ENCODE measurements at regions of chr11 and their contacts with region 1.

Region 1: DNA sequence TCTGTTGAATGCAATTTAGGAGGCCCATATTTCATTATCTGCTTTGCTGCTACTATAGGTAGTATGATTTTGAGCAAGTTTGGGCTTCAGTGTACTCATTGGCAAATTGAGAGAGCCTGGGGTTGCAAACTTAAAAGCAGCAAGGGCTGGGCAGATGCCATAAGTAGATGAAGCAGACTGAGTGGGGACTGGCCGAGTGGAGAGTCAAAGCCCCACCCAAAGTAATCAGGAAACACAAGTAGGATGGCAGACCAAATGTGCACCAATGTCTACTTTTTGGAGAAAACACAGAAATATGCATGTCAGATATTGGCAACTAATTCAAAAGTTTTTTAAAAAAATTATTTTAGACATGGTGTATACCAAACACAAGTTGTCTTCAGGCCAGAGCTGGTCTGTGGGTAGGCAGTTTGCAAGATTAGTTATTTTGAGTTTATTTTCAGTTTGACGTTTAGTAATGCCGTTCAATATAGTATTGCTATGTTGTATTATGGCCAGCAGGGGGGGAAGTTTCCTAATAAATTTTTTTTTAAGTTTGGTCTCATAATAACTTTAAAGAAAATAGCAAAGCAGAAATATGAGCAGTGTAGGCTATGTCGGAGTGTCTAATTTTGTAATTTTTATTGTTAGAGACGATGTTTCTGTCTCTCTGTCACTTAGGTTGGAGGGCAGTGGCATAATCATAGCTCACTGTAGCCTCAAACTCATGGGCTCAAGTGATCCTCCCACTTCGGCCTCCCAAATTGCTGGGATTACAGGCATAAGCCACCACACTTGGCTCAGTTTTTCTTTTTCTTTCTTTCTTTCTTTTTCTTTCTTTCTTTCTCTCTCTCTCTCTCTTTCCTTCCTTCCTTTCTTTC is 105.1 kb downstream of the HIPK3 start:
- DNase-seq: no peak
- ATAC-seq: peak; percentile 84
- H3K4me3 ChIP-seq: no peak overlapping the region
- H3K27ac ChIP-seq: no peak overlapping the region
- H3K4me1 ChIP-seq: no peaks in the 10 kb centered on the region
- H3K27me3 ChIP-seq: no peaks in the 10 kb centered on the region
- CTCF ChIP-seq: peak; percentile 39 to 63 (median 47); a peak in 4 of 6 replicates
- EP300 ChIP-seq: no peak
- POLR2A ChIP-seq: no peak
- RAD21 ChIP-seq: peak; percentile 76

Region 2: DNA sequence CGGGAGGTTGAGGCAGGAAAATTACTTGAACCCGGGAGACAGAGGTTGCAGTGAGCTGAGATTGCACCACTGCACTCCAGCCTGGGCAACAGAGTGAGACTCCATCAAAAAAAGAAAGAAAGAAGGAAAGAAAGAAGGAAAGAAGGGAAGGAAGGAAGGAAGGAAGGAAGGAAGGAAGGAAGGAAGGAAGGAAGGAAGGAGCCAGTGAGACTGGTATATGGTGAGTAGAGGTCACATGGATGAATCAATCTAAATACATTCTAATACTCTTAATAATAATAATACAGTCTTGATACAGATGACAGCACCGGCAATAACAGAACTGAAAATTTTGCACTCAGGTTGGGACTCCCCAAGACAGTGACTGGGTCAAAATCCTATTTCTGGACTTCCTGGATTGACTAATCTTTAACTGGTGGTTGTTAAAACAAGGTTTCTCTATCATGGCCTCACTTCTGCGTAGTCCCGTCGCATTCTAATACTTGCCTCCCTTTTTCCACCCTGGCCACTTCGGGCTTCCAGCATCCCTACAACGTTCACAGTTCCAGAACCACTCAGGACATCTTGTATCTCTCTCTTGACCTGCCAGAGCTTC is 832.2 kb before region 1 on chr11:
- CTCF ChIA-PET with region 1: no interaction called
- POLR2A ChIA-PET with region 1: no interaction called
- RAD21 ChIA-PET with region 1: no interaction called
- SMC1A ChIA-PET with region 1: no interaction called
- in situ Hi-C with region 1: no loop called
- intact Hi-C with region 1: no loop called
- DNase-seq: peak; percentile 59
- ATAC-seq: peak; percentile 99
- H3K4me3 ChIP-seq: no peak overlapping the region
- H3K27ac ChIP-seq: peak overlapping the region; percentile 38
- H3K4me1 ChIP-seq: peaks cover 12% of the 10 kb centered on the region
- H3K27me3 ChIP-seq: no peaks in the 10 kb centered on the region
- CTCF ChIP-seq: no peak
- EP300 ChIP-seq: peak; percentile 76 to 79; a peak in 3 of 4 replicates
- POLR2A ChIP-seq: no peak
- RAD21 ChIP-seq: no peak

Region 3: DNA sequence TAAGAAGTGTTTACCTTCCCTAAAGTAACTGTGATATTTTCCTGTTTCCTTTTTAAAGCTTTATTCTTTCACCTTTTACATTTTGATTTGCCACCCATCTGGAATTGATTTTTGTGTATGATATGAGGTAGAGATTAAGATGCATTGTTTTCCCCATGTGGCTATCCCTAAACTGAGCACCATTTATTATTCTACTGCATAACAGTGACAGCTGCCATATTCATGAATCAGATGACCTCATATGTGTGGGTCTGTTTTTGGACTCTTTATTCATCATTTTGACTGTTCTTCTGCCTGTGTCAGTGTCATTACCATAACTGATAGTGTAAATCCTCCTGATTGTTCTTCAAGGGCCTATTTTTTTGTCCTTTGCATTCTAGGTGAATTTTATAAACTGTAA is 54.3 kb before region 1 on chr11:
- CTCF ChIA-PET with region 1: no interaction called
- POLR2A ChIA-PET with region 1: no interaction called
- RAD21 ChIA-PET with region 1: no interaction called
- SMC1A ChIA-PET with region 1: no interaction called
- in situ Hi-C with region 1: no loop called
- intact Hi-C with region 1: no loop called
- DNase-seq: no peak
- ATAC-seq: peak; percentile 47; the same call in 1 of the 3 replicates
- H3K4me3 ChIP-seq: no peak overlapping the region
- H3K27ac ChIP-seq: no peak overlapping the region
- H3K4me1 ChIP-seq: no peaks in the 10 kb centered on the region
- H3K27me3 ChIP-seq: no peaks in the 10 kb centered on the region
- CTCF ChIP-seq: no peak
- EP300 ChIP-seq: no peak
- POLR2A ChIP-seq: no peak
- RAD21 ChIP-seq: no peak

Region 4: DNA sequence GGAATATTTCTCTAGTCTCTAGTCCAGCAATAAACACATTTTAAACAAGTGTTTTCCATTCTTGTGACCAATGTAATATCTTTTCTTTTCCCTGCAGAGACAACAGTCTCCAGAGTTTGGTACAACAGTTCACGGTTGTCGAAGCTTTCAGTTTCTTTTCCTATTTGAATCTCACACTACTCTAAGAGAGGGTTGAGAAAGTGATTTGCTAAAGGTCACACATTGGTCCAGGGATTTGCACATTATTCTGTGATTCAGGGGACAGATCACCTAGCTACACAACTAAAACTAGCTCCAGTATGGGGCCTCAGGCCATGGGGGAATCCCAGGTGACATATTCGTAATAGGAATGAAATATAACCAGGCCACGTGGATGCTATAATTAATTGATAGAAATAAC is 27.4 kb after region 1 on chr11:
- CTCF ChIA-PET with region 1: interaction called, 6 read pairs
- POLR2A ChIA-PET with region 1: no interaction called
- RAD21 ChIA-PET with region 1: interaction called, 3 read pairs
- SMC1A ChIA-PET with region 1: interaction called, 13 read pairs
- in situ Hi-C with region 1: no loop called
- intact Hi-C with region 1: no loop called
- DNase-seq: peak; percentile 45
- ATAC-seq: peak; percentile 80
- H3K4me3 ChIP-seq: peak overlapping the region; percentile 45; the same call in 1 of the 2 replicates
- H3K27ac ChIP-seq: peak overlapping the region; percentile 85
- H3K4me1 ChIP-seq: peaks cover 28% of the 10 kb centered on the region
- H3K27me3 ChIP-seq: no peaks in the 10 kb centered on the region
- CTCF ChIP-seq: no peak
- EP300 ChIP-seq: no peak
- POLR2A ChIP-seq: no peak
- RAD21 ChIP-seq: no peak

Region 5: GRCh38 chr11:33520112-33520511 is 157.8 kb after region 1 on chr11:
- CTCF ChIA-PET with region 1: interaction called, 4 read pairs
- POLR2A ChIA-PET with region 1: no interaction called
- RAD21 ChIA-PET with region 1: no interaction called
- SMC1A ChIA-PET with region 1: no interaction called
- in situ Hi-C with region 1: no loop called
- intact Hi-C with region 1: loop called (anchors 5 kb)
- DNase-seq: no peak
- ATAC-seq: peak; percentile 51; the same call in 2 of the 3 replicates
- H3K4me3 ChIP-seq: no peak overlapping the region
- H3K27ac ChIP-seq: no peak overlapping the region
- H3K4me1 ChIP-seq: no peaks in the 10 kb centered on the region
- H3K27me3 ChIP-seq: no peaks in the 10 kb centered on the region
- CTCF ChIP-seq: no peak
- EP300 ChIP-seq: no peak
- POLR2A ChIP-seq: no peak
- RAD21 ChIP-seq: no peak

Region 6: DNA sequence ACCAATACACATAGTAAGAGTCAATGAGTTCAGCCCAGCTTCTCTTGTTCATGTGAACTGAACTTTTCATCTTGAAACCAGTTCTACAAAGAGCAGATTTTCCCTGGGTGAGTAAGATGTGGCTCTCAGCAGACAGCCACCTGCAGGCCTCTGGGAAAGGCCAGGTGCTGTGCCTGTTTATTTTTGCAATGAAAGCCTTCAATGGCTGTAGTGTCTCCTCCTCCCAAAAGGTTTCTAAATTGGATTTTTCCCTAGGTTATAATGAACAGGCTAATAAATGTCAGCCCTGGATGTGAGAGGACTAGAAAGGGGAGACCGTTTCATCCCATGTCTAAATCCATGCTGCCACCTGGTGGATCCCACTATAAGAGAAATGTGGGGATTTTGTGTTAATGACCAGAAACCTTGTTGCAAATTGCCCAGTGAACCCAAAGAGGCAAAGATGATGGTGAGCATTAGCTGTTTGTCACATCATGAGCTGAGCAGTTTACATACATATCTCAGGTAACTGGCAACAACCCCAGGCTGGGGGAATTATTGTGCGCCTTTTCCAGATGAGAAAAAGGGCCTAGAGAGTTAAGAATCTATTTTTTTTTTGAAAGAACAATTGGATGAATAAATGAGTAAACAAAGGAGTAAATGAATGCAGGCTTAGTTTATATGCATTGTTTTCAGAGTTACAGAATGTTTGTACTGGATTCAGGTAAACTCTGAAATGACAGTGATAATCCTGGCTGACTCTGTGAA is 325.6 kb after region 1 on chr11:
- CTCF ChIA-PET with region 1: interaction called, 42 read pairs
- POLR2A ChIA-PET with region 1: interaction called, 6 read pairs
- RAD21 ChIA-PET with region 1: interaction called, 14 read pairs
- SMC1A ChIA-PET with region 1: interaction called, 8 read pairs
- in situ Hi-C with region 1: loop called (anchors 5 kb)
- intact Hi-C with region 1: loop called (anchors 1 kb)
- DNase-seq: peak; percentile 33
- ATAC-seq: peak; percentile 74
- H3K4me3 ChIP-seq: no peak overlapping the region
- H3K27ac ChIP-seq: no peak overlapping the region; the same call in 1 of the 2 replicates
- H3K4me1 ChIP-seq: peaks cover 3% of the 10 kb centered on the region; the same call in 1 of the 2 replicates
- H3K27me3 ChIP-seq: no peaks in the 10 kb centered on the region
- CTCF ChIP-seq: peak; percentile 60 to 71 (median 62)
- EP300 ChIP-seq: no peak
- POLR2A ChIP-seq: no peak
- RAD21 ChIP-seq: peak; percentile 92